Activated CD4-positive, alpha-beta memory T cell treated with anti-CD3 and anti-CD28 coated beads for 36 hours (primary cell): ENCODE measurements at regions of chr1 and their contacts with region 1.

Region 1: DNA sequence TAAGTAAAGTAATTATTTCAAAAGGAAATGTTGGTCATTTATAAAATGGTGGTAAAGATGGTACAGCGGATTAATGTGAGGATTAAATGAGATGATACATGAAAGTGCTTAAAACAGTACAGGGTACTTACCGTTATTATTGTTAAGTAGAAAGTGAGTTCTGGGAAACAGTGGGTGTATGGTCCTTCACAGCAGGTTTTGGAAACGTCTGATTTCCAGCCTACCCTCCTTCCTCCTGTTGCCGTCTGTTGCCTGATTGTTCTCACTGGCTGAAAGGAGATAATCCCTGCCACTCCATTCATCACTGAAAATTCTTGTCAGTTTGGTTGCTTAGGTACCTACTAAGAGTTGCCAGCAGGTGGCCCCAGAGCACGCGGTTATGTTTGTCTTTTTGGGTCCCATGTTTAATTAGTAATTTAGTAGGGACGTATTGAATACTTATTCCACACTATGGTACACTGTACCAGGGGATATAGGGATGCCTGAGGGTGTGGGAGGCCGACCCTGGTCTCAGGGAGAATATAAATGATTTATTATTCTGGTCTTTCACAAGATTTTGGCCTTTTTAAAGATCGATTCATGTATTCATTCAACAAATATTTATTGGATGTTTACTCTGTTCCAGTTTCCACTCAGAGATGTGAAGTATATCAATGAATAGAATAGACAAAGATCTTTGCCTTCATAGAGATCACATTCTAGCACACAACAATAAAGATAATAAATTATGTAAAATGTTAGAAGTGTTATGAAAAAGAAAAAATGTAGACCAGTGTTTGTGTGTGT is 30.8 kb upstream of the RPTN start:
- DNase-seq: peak; percentile 80
- H3K4me3 Mint-ChIP-seq: peak overlapping the region; percentile 68
- H3K27ac Mint-ChIP-seq: no peak overlapping the region
- H3K4me1 Mint-ChIP-seq: peaks cover 8% of the 10 kb centered on the region
- H3K27me3 Mint-ChIP-seq: peaks cover 2% of the 10 kb centered on the region

Region 2: DNA sequence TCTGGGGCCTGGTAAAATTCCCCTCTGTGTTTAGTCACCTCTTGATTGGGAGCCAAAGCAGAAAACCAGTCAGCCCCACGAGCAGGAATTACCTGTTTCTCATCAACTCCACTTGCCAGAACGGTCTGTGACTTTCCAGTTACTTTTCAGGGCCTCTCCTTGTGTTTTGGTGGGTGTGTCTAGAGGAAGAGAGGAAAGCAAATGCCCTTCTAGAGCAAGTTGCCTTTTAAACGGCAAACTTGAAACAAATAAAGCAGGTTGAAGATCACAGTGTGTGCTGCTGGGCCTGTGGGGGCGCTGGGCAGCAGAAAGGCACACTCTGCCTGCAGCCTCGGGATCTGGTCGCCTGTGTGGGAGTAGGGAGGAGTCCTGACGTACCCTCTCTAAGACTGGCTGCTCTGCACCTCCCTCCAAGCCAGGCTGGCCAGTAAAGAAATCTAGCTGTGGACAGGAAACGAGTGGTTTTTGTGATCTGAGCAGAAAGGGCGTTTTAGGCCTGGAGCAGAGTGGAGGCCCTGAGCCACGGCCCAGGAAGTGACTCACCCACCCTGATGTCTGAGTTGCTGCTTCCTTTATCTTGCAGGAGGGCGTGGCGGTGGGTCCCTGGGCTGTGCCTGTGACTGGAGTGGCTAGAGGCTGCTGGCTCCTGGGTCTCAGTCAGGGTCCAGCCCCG is 142.0 kb before region 1 on chr1:
- CTCF ChIA-PET with region 1: interaction called, 442 read pairs
- POLR2A ChIA-PET with region 1: no interaction called
- intact Hi-C with region 1: loop called (anchors 1 kb)
- DNase-seq: peak; percentile 94
- H3K4me3 Mint-ChIP-seq: peak overlapping the region; percentile 72
- H3K27ac Mint-ChIP-seq: peak overlapping the region; percentile 99
- H3K4me1 Mint-ChIP-seq: peaks cover 29% of the 10 kb centered on the region
- H3K27me3 Mint-ChIP-seq: peaks cover 2% of the 10 kb centered on the region

Region 3: GRCh38 chr1:152141974-152142584 is 47.8 kb before region 1 on chr1:
- CTCF ChIA-PET with region 1: interaction called, 18 read pairs
- POLR2A ChIA-PET with region 1: no interaction called
- intact Hi-C with region 1: loop called (anchors 1 kb)
- DNase-seq: peak; percentile 41
- H3K4me3 Mint-ChIP-seq: no peak overlapping the region
- H3K27ac Mint-ChIP-seq: no peak overlapping the region
- H3K4me1 Mint-ChIP-seq: peaks cover 5% of the 10 kb centered on the region
- H3K27me3 Mint-ChIP-seq: peaks cover 41% of the 10 kb centered on the region

Region 4: DNA sequence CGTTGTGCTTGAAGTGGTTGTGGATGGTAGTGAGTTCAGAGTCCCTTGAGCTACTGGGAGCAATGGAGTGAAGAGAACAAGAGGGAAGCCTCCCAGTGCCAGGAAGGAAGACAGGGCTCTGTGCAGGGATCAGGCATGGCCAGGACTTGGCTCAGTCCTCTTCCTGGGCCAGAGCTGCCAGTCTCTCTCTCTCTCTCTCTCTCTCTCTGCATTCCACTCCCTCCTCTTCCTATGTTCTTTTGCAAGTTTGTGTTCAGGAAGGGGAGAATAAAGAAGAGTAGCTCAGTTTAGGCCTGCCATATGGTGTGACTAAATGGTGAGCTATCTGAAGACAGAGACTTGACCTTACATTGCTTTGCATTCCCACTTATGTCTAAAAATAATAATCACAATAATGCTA is 10.3 kb before region 1 on chr1:
- CTCF ChIA-PET with region 1: interaction called, 19 read pairs
- POLR2A ChIA-PET with region 1: no interaction called
- intact Hi-C with region 1: no loop called
- DNase-seq: no peak
- H3K4me3 Mint-ChIP-seq: no peak overlapping the region
- H3K27ac Mint-ChIP-seq: no peak overlapping the region
- H3K4me1 Mint-ChIP-seq: no peaks in the 10 kb centered on the region
- H3K27me3 Mint-ChIP-seq: peaks cover 6% of the 10 kb centered on the region

Region 5: DNA sequence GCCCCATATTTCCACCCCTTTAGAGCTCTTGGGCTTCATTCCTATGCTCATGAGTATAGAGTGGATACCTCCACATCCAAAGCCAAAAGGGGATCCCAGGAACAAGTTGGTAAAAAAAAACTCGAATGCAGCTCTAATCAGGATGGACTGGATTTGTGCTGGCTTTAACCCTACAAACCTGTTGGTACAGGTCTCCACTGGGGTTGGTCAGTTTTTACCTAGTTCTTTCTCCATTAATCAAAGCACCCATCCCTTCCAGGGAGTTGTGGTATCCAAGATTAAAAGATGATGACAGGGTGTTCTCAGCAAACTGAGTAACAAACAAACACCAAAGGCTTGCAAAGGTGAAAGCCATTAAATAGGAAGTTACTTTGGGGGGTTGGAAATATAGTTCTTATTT is 230.1 kb after region 1 on chr1:
- CTCF ChIA-PET with region 1: no interaction called
- POLR2A ChIA-PET with region 1: no interaction called
- intact Hi-C with region 1: no loop called
- DNase-seq: no peak
- H3K4me3 Mint-ChIP-seq: no peak overlapping the region
- H3K27ac Mint-ChIP-seq: no peak overlapping the region
- H3K4me1 Mint-ChIP-seq: no peaks in the 10 kb centered on the region
- H3K27me3 Mint-ChIP-seq: peaks cover 7% of the 10 kb centered on the region

Region 6: GRCh38 chr1:152440635-152441471 is 251.0 kb after region 1 on chr1:
- CTCF ChIA-PET with region 1: interaction called, 24 read pairs
- POLR2A ChIA-PET with region 1: no interaction called
- intact Hi-C with region 1: loop called (anchors 1 kb)
- DNase-seq: peak; percentile 77
- H3K4me3 Mint-ChIP-seq: no peak overlapping the region
- H3K27ac Mint-ChIP-seq: no peak overlapping the region
- H3K4me1 Mint-ChIP-seq: no peaks in the 10 kb centered on the region
- H3K27me3 Mint-ChIP-seq: peaks cover 21% of the 10 kb centered on the region

Region 7: GRCh38 chr1:152673016-152673415 is 483.2 kb after region 1 on chr1:
- CTCF ChIA-PET with region 1: no interaction called
- POLR2A ChIA-PET with region 1: no interaction called
- intact Hi-C with region 1: no loop called
- DNase-seq: no peak
- H3K4me3 Mint-ChIP-seq: no peak overlapping the region
- H3K27ac Mint-ChIP-seq: no peak overlapping the region
- H3K4me1 Mint-ChIP-seq: no peaks in the 10 kb centered on the region
- H3K27me3 Mint-ChIP-seq: peaks cover 12% of the 10 kb centered on the region